Adrenal gland (tissue), 19 donors: ENCODE measurements at regions of chr3 and their contacts with region 1.

Region 1: GRCh38 chr3:68893600-68894239 is 38.6 kb downstream of the TAFA4 start:
- DNase-seq: no peak
- H3K4me3 ChIP-seq: no peak overlapping the region
- H3K27ac ChIP-seq: no peak overlapping the region
- H3K4me1 ChIP-seq: no peaks in the 10 kb centered on the region
- H3K27me3 ChIP-seq: no peaks in the 10 kb centered on the region
- CTCF ChIP-seq: peak; percentile 41 to 73 (median 56)
- POLR2A ChIP-seq: no peak

Region 2: DNA sequence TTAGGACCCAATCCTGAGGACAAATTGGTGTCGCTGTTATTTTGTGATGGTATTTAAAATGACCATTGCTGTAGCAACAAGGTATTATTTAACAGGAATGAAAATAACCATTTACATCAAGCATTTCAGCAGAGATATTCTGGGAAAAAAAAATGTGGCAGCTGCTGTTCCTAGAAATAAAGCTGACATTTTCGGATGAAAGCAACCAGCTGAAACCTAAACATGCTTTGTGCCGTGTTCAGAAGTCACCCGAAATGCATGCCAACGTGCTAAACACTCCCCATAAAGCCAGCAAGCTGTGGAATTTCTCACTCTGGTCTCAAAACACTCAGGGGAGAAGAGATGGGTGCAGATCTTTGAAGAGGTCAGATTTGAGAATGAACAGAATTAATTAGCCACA is 70.2 kb after region 1 on chr3:
- intact Hi-C with region 1: loop called in 1 of 2 experiments (anchors 10 kb)
- DNase-seq: no peak
- H3K4me3 ChIP-seq: no peak overlapping the region
- H3K27ac ChIP-seq: no peak overlapping the region
- H3K4me1 ChIP-seq: peaks cover 0 to 4% of the 10 kb centered on the region in 2 donors
- H3K27me3 ChIP-seq: peaks cover 3% of the 10 kb centered on the region
- CTCF ChIP-seq: no peak
- POLR2A ChIP-seq: no peak